Right ventricle myocardium inferior (tissue), 1 donor: ENCODE measurements at regions of chr4 and their contacts with region 1.

Region 1: GRCh38 chr4:986879-987623 is at the start of gene IDUA:
- DNase-seq: peak; percentile 93
- ATAC-seq: peak; percentile 88
- total RNA-seq, gene IDUA: 8.6 TPM

Region 2: DNA sequence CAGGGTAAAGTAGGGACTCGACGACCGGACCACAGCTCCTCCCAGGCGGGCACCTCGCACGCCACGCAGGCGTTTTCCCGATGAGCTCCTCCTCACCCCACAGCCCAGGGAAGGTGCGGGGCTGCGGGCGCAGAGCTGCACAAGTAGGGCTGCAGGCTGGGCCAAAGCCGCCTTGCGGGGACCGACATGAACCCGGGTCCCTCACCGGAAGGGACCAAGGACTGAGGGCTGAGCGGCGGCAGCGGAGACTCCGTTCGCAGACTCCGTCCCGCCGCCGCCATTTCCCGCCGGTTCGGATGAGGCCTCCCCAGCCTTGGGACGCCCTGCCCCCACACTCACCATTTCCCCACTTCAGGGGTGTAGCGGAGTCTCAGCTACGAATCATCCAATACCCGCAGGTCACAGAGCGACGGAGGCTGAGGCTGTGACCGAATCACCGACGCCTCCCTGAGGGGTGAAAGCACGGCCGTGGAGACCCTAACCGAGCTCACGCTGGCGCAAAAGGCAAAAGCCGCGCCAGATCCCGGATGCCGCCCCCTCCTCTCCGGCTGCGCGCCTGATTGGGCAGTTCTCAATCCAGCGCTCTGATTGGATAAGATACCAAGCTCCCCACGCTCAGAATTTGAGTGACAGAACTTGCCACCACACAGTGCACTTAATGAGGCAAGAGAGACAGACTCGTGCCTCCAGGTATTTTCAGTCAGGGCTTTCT is 681.9 kb before region 1 on chr4 and contains the start of gene ZNF732:
- intact Hi-C with region 1: no loop called
- DNase-seq: peak; percentile 67
- ATAC-seq: peak; percentile 84
- total RNA-seq, gene ZNF732: not detected

Region 3: DNA sequence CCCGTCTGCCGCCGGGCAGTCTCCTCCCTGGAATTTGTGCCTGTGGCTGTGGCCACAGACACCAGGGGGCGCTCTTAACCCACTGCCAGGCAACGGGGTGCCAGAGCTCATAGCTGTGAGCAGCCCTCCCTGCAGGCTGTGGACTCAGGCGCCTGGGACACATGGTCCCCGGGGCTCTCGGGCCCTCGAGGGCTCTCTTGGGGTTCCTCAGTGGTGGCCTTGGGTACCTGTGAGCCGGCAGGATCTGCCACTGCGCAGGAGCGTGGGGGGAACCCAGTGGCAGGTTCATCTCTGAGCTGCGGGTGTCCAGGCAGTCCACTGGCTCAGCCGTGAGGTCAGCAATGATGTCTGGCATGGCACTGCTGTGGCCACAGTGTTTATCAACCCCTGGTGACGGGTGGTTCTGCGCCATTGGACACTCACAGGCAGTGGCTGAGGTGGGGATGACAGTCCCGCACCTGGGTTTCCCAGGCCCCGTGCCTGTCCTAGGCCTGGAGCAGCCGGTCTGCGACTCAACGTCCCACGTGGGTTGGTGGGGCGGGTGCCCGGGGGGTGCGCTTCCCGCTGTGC is 244.2 kb before region 1 on chr4:
- intact Hi-C with region 1: loop called (anchors 5 kb)
- DNase-seq: peak; percentile 84
- ATAC-seq: peak; percentile 85

Region 4: DNA sequence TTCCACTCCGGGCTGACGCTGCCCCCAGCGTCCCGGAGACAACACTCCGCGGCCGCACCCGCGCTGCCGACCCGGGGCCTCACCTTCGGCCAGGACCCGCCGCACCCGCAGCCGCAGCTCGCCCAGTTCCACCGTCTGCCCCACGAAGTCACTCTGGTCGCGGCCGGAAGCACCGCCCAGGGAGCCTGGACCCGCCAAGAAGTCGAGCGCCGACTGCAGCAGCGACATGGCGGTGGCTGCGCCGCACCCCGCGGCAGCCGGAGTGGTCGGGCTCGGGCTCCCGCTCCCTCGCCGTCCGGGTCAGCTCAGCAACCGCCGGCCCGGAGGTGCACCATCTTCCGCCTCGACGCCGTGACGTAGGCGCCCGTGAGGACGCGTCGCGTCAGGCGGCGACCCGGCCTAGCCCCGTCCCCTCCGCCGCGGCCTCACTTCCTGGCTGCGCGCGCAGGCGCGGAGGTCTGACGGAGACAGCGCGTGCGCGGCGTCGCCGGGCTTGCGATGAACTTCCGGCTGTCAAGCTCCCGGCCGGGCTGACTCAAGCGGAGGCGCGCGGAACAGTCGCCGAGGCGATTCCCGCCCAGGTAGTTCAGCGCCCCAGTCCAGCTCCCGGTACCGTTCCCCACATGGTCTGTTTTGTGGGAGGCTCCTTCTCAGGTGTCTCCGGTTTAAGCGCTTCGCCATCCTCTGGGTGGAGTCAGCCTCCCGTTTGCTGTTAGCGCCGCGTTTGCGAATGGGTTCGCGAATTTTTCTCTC is 54.9 kb before region 1 on chr4 and contains the starts of genes GAK and TMEM175:
- intact Hi-C with region 1: loop called (anchors 10 kb)
- DNase-seq: peak; percentile 99
- ATAC-seq: peak; percentile 99
- total RNA-seq, gene GAK: 29.3 TPM
- total RNA-seq, gene TMEM175: 17.4 TPM

Region 5: DNA sequence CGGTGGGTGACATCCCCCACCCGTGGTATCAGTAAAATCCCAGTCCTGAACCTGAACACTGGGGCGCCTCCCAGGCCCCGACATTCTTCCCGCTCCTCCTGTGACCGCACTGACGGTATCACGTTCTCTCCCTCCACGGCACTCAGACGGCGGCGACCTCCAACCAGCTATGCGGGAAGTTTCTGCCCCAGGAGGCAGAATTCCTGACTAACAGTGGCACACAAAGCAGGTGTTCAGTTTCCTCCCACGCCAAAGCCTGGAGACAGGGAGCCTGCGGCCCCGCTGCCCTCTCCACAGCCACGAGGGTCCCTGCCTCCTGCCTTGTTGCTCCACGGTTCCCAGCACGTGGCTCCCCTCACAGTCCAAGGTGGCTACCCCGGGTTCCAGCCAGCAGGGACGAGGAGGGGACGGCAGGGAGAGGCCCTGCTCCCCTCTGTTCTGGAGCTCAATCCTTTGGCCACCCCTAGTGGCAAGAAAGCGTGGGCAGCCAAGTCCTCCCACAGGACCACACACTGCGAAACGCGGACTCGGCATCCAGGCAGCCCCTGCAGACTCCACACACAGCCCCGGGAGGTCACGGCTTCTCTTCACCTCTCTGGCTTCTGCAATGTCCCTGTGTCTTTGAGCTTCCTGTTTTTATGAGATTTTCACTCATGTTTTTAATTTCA is 246.7 kb after region 1 on chr4:
- intact Hi-C with region 1: no loop called
- DNase-seq: peak; percentile 70
- ATAC-seq: peak; percentile 70